ENCODE measurements at regions of chr1 and their contacts with region 1.

Region 1: GRCh38 chr1:93061895-93062792 is 16.9 kb upstream of the MTF2 start:
- DNase-seq: peak; percentile 68
- ATAC-seq: peak; percentile 69
- H3K4me3 ChIP-seq: no peak overlapping the region
- H3K4me3 Mint-ChIP-seq: no peak overlapping the region
- H3K27ac ChIP-seq: no peak overlapping the region
- H3K27ac Mint-ChIP-seq: no peak overlapping the region
- H3K4me1 ChIP-seq: no peaks in the 10 kb centered on the region
- H3K4me1 Mint-ChIP-seq: no peaks in the 10 kb centered on the region
- H3K27me3 ChIP-seq: peaks cover 0 to 5% (median 0%) of the 10 kb centered on the region in 4 experiments
- H3K27me3 Mint-ChIP-seq: peaks cover 24% of the 10 kb centered on the region
- CTCF ChIP-seq: peak; percentile 68

Region 2: DNA sequence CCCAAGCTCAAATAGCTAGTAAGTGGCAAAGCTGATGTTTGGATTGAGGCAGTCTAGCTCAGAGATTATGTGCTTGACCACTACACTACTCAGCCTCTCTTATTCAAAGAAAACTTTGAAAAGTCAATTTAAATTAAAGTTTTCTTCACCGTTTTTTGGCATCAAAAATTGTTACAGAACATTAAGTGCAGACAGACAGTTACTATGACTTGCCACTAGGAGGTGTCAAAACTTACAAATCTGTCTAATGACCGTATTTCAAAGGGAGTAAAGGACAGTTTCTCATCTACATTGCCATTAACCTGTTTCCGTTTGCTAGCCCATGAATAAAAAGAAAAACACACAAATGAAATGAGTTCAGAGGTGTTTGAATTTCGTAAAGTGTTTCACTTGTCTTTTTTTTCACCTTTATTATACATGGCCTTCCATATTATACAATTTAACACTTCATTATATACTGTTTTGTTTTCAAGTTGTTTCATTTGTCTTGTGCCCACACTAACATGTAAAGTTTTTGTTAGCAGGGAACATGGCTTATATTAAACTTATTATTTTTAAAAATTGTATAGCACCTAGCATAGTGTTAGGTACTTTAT is 40.5 kb before region 1 on chr1:
- CTCF ChIA-PET with region 1: interaction called, 261 read pairs
- POLR2A ChIA-PET with region 1: no interaction called
- intact Hi-C with region 1: loop called (anchors 1 kb)
- DNase-seq: peak; percentile 70
- ATAC-seq: peak; percentile 81
- H3K4me3 ChIP-seq: peak overlapping the region in 1 of 5 experiments; percentile 40
- H3K4me3 Mint-ChIP-seq: peak overlapping the region; percentile 72
- H3K27ac ChIP-seq: peak overlapping the region in 1 of 2 donors; percentile 16
- H3K27ac Mint-ChIP-seq: no peak overlapping the region
- H3K4me1 ChIP-seq: peaks cover 8 to 10% of the 10 kb centered on the region in 2 donors
- H3K4me1 Mint-ChIP-seq: peaks cover 11% of the 10 kb centered on the region
- H3K27me3 ChIP-seq: no peaks in the 10 kb centered on the region
- H3K27me3 Mint-ChIP-seq: peaks cover 10% of the 10 kb centered on the region
- CTCF ChIP-seq: peak; percentile 95

Region 3: GRCh38 chr1:93033785-93034184 is 28.4 kb before region 1 on chr1:
- CTCF ChIA-PET with region 1: interaction called, 261 read pairs
- POLR2A ChIA-PET with region 1: no interaction called
- intact Hi-C with region 1: no loop called
- DNase-seq: peak; percentile 59
- ATAC-seq: peak; percentile 94
- H3K4me3 ChIP-seq: peak overlapping the region in 1 of 5 experiments; percentile 14
- H3K4me3 Mint-ChIP-seq: no peak overlapping the region
- H3K27ac ChIP-seq: peak overlapping the region; percentile 15 to 58
- H3K27ac Mint-ChIP-seq: peak overlapping the region; percentile 60
- H3K4me1 ChIP-seq: peaks cover 15 to 16% of the 10 kb centered on the region in 2 donors
- H3K4me1 Mint-ChIP-seq: peaks cover 32% of the 10 kb centered on the region
- H3K27me3 ChIP-seq: no peaks in the 10 kb centered on the region
- H3K27me3 Mint-ChIP-seq: no peaks in the 10 kb centered on the region
- CTCF ChIP-seq: no peak

Region 4: GRCh38 chr1:93051961-93052360 is 10.2 kb before region 1 on chr1:
- CTCF ChIA-PET with region 1: interaction called, 21 read pairs
- POLR2A ChIA-PET with region 1: interaction called, 3 read pairs
- intact Hi-C with region 1: no loop called
- DNase-seq: no peak
- ATAC-seq: no peak
- H3K4me3 ChIP-seq: no peak overlapping the region
- H3K4me3 Mint-ChIP-seq: no peak overlapping the region
- H3K27ac ChIP-seq: no peak overlapping the region
- H3K27ac Mint-ChIP-seq: no peak overlapping the region
- H3K4me1 ChIP-seq: no peaks in the 10 kb centered on the region
- H3K4me1 Mint-ChIP-seq: no peaks in the 10 kb centered on the region
- H3K27me3 ChIP-seq: no peaks in the 10 kb centered on the region
- H3K27me3 Mint-ChIP-seq: no peaks in the 10 kb centered on the region
- CTCF ChIP-seq: no peak

Region 5: GRCh38 chr1:93137604-93138292 is 75.6 kb after region 1 on chr1:
- CTCF ChIA-PET with region 1: no interaction called
- POLR2A ChIA-PET with region 1: no interaction called
- intact Hi-C with region 1: no loop called
- DNase-seq: no peak
- ATAC-seq: no peak
- H3K4me3 ChIP-seq: no peak overlapping the region
- H3K4me3 Mint-ChIP-seq: no peak overlapping the region
- H3K27ac ChIP-seq: no peak overlapping the region
- H3K27ac Mint-ChIP-seq: no peak overlapping the region
- H3K4me1 ChIP-seq: no peaks in the 10 kb centered on the region
- H3K4me1 Mint-ChIP-seq: no peaks in the 10 kb centered on the region
- H3K27me3 ChIP-seq: no peaks in the 10 kb centered on the region
- H3K27me3 Mint-ChIP-seq: no peaks in the 10 kb centered on the region
- CTCF ChIP-seq: no peak

Region 6: GRCh38 chr1:93148001-93148400 is 85.9 kb after region 1 on chr1:
- CTCF ChIA-PET with region 1: no interaction called
- POLR2A ChIA-PET with region 1: no interaction called
- intact Hi-C with region 1: no loop called
- DNase-seq: no peak
- ATAC-seq: no peak
- H3K4me3 ChIP-seq: no peak overlapping the region
- H3K4me3 Mint-ChIP-seq: no peak overlapping the region
- H3K27ac ChIP-seq: no peak overlapping the region
- H3K27ac Mint-ChIP-seq: no peak overlapping the region
- H3K4me1 ChIP-seq: no peaks in the 10 kb centered on the region
- H3K4me1 Mint-ChIP-seq: no peaks in the 10 kb centered on the region
- H3K27me3 ChIP-seq: no peaks in the 10 kb centered on the region
- H3K27me3 Mint-ChIP-seq: no peaks in the 10 kb centered on the region
- CTCF ChIP-seq: no peak

Region 7: DNA sequence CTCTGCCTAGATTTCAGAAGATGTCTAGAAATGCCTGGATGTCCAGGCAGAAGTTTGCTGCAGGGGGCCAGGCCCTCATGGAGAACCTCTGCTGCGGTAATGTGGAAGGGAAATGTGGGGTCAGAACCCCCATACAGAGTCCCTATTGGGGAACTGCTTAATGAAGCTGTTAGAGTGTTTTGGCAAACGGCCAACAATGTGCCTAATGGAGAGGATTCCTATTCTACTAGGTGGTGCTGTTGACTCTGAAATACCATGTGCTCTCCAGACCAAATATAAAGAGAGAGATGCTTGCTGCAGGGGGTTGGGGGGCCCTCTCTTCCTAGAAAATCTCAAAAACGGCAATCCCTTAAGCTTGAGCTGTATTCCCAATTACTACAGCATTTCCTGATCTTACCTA is 226.4 kb after region 1 on chr1:
- CTCF ChIA-PET with region 1: no interaction called
- POLR2A ChIA-PET with region 1: no interaction called
- intact Hi-C with region 1: no loop called
- DNase-seq: no peak
- ATAC-seq: no peak
- H3K4me3 ChIP-seq: no peak overlapping the region
- H3K4me3 Mint-ChIP-seq: no peak overlapping the region
- H3K27ac ChIP-seq: no peak overlapping the region
- H3K27ac Mint-ChIP-seq: no peak overlapping the region
- H3K4me1 ChIP-seq: no peaks in the 10 kb centered on the region
- H3K4me1 Mint-ChIP-seq: peaks cover under 1% of the 10 kb centered on the region
- H3K27me3 ChIP-seq: no peaks in the 10 kb centered on the region
- H3K27me3 Mint-ChIP-seq: no peaks in the 10 kb centered on the region
- CTCF ChIP-seq: no peak

Measured in B cell (primary cell).